Right cardiac atrium (tissue), 5 donors: ENCODE measurements at regions of chr4 and their contacts with region 1.

Region 1: DNA sequence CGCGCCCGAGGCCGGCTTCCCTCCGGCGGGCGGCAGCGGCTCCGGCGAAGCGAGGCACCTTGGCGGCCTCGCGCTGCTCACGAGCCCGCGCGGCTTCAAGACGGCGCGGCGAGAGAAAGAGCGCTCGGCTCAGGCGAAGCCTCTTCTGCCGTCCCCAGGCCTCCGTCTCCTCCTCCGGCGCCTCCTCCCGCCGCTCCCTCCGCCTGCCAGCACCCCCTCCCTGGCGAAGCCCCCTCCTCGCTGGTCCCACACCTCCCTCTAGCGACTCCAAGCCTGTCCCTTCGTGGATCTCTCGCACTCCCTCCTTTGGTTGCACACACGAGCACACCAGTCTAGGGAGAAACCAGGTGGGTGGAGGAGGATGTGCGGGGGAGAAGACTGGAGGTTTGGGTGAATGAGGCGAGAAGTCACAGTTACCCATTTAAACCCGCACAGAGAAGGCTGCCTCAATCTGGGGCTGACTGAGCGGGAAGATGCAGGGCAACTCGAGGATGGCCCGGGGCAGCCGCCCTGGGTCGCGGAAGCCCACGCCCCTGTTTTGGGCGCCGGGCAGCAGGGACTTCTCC is at the start of gene CAMK2D:
- DNase-seq: peak; percentile 84 to 95 (median 94)
- ATAC-seq: peak; percentile 78 to 88
- H3K4me3 ChIP-seq: peak within 1 kb of the TSS; percentile 71
- H3K27ac ChIP-seq: peak within 1 kb of the TSS; percentile 98
- H3K4me1 ChIP-seq: no peaks in the 10 kb centered on the region
- H3K27me3 ChIP-seq: no peaks in the 10 kb centered on the region
- total RNA-seq, gene CAMK2D: 150 to 177 (median 152) TPM

Region 2: DNA sequence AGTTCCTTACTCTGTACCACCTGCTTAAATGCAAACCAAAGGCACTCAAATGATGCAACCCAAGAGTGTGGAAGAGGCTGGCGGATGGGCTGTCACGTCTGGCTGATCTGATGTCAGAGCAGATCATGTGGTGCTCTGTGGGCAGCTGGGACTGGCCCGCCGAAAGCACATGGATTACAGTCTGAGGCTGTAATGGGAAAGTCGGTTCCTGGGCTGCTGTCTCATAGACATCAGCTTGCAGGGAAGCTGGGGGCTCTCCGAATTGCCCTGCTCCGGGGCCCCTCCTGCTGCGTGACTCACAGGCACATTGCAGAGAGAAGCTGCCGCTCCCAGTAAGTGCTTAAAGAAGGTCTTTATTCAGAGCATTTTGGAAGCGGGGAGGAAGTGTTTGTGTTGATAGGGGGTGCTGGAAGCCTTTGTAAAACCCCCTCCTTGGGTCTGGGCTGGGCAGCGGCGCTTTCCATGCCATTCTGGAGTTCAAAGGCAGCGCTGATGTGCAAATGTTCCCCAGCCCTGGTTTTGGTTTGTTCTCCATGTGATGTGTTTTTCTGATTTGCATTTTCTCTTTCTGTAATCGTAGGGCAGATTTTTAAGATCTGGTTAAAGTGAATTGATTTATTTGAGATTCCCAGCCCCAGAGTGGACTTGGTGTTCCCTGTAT is 943.6 kb before region 1 on chr4:
- intact Hi-C with region 1: no loop called
- DNase-seq: peak; percentile 72 to 79 (median 78)
- ATAC-seq: peak; percentile 93 to 94
- H3K4me3 ChIP-seq: peak overlapping the region; percentile 63
- H3K27ac ChIP-seq: no peak overlapping the region
- H3K4me1 ChIP-seq: peaks cover 2% of the 10 kb centered on the region
- H3K27me3 ChIP-seq: no peaks in the 10 kb centered on the region

Region 3: GRCh38 chr4:113468165-113469022 is 293.3 kb before region 1 on chr4:
- intact Hi-C with region 1: no loop called
- DNase-seq: peak; percentile 72 to 84 (median 82)
- ATAC-seq: peak; percentile 97 to 98
- H3K4me3 ChIP-seq: no peak overlapping the region
- H3K27ac ChIP-seq: peak overlapping the region; percentile 98
- H3K4me1 ChIP-seq: peaks cover 5% of the 10 kb centered on the region
- H3K27me3 ChIP-seq: no peaks in the 10 kb centered on the region

Region 4: GRCh38 chr4:113547487-113548042 is 214.1 kb before region 1 on chr4:
- intact Hi-C with region 1: loop called in 3 of 4 experiments (anchors 5 to 10 kb)
- DNase-seq: peak; percentile 87 to 92 (median 88)
- ATAC-seq: peak; percentile 98 to 99
- H3K4me3 ChIP-seq: no peak overlapping the region
- H3K27ac ChIP-seq: no peak overlapping the region
- H3K4me1 ChIP-seq: peaks cover 2% of the 10 kb centered on the region
- H3K27me3 ChIP-seq: no peaks in the 10 kb centered on the region

Region 5: DNA sequence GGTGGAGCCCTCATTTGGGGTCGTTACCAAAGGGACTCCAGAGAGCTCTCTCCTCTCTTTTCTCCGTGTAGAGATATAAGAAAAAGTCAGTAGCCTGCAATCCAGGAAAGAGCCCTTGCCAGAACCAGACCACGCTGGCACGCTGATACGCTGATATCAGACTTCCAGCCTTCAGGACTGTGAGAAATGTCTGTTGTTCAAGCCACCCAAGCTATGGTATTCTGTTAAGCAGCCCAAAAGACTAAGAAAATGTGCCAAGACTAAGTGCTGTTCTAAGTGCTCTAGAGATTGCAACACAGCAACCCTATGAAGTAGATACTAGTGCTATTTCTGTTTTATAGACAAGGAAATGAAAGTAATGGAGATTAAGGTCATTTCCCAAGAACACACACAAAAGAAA is 205.8 kb before region 1 on chr4:
- intact Hi-C with region 1: loop called in 1 of 4 experiments (anchors 10 kb)
- DNase-seq: peak; percentile 64 to 86 (median 79)
- ATAC-seq: peak; percentile 97
- H3K4me3 ChIP-seq: peak overlapping the region; percentile 8
- H3K27ac ChIP-seq: peak overlapping the region; percentile 85
- H3K4me1 ChIP-seq: peaks cover 5% of the 10 kb centered on the region
- H3K27me3 ChIP-seq: no peaks in the 10 kb centered on the region